ENCODE measurements at regions of chr19 and their contacts with region 1.

Region 1: DNA sequence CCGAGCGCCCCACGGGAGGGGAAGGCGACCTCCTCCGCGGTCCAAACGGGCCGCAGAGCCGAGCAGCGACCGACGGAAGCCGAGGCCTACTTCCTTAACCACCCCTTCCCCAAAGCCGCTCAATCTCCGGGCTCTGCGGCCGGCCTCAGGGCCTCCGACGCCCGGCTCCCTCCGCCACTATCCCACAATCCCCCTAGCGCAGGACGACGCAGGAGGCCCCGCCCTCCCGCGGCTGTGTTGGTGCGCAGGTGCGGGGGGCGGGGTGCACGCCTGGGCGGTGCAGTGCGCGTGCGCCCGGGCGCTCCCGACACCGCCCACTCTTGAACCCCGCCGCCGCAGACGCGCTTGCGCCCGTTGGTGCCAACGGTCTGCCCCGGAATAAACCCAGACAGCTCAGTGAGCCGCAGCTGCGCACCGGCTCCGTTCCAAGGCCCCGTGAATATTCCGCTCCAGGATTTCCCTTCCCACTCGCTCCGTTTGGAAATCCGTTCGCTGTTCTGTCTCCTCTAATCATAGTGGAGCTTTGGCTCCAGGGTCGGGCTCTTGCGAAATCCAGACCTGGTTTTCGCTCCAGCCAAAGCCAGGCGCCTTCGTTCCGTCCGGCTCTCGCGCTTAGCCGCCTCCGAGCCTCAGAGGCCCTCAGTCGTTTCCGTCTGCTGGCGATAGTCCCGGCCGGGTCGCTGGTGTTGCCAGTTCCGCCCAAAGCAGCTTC is at the start of gene PPP6R1:
- DNase-seq: peak; percentile 100
- H3K4me3 ChIP-seq: peak within 1 kb of the TSS; percentile 87
- H3K27ac ChIP-seq: peak within 1 kb of the TSS; percentile 89
- H3K27me3 ChIP-seq: no peaks in the 10 kb centered on the region
- CTCF ChIP-seq: no peak
- polyA plus RNA-seq, gene PPP6R1: 24.5 and 30.1 TPM in 2 replicates

Region 2: GRCh38 chr19:55216461-55217198 is 42.4 kb before region 1 on chr19:
- CTCF ChIA-PET with region 1: no interaction called
- POLR2A ChIA-PET with region 1: interaction called, 26 read pairs
- DNase-seq: peak; percentile 97
- H3K4me3 ChIP-seq: peak overlapping the region; percentile 62
- H3K27ac ChIP-seq: peak overlapping the region; percentile 89
- H3K27me3 ChIP-seq: no peaks in the 10 kb centered on the region
- CTCF ChIP-seq: peak; percentile 24